RWPE1 (cell line): ENCODE measurements at regions of chr12 and their contacts with region 1.

Region 1: DNA sequence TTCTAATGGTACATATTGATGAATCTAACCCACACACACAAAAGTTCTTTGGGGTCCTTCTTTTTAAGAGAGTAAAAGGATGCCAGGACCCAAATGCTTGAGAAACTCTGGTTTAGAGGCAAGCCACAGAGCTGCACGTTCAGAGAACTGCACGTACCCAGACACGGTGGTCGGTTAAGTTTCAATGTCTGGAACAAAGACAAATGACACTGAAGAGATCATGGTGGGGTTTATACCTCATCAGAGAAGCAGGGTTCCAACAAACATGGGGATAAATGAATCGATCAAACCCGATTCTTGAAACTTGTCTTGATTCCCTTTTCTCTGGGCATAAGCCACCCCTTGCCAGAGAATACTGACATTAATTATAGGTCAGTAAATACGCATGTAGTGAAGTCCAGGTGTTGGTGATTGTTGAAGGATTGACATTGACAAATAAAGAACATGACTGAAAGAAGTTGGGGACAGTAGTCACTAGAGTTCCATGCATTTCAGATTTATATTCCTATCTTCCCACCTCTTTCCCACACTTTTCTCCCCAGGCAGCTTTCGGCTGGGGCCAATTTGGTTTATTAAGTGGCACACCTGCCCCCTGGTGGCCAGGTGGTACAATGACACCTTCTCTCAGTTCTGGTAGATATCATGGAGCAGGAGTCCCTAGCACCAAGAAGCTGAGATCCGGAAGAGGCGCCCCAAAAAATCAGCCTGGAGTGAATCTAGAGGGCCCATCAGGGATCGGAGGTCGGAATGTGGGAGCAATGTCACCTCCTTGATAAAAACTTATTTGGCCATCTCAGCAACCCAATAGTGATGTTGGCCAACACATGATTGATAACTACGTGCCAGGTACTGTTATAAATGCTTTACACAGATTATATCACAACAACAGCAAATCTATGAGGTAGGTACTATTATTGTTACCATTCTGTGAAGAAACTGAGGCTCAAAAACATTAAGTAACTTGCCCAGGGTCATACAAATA is 17.8 kb upstream of the HDAC7 start:
- DNase-seq: peak; percentile 84
- H3K27ac ChIP-seq: no peak overlapping the region
- CTCF ChIP-seq: peak; percentile 84

Region 2: DNA sequence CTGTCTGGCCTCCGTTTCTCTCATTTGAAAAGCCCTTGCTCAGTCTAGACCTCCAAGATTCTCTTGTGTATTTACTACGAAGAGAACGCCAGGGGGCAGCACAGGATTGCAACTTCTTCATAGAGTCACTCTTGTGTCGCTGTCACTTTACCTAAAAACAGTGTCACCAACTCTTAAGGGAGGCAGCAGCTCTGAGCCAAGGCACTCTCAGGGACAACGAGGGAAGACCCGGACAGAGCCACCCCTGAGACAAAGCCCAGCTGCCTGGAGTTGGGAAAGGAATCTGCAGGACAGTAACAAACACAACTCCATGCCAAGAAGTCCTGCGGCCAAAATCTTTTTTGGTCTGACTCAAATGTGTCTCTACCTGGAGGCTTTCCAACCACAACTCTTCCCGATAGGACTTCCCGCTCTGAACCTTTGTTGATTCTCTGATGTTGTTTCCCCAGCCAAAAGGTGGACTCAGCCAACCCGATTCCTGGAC is 122.0 kb before region 1 on chr12:
- CTCF ChIA-PET with region 1: interaction called, 19 read pairs
- POLR2A ChIA-PET with region 1: no interaction called
- DNase-seq: peak; percentile 55
- H3K27ac ChIP-seq: peak overlapping the region; percentile 8; the same call in 1 of the 2 replicates
- CTCF ChIP-seq: peak; percentile 80

Region 3: GRCh38 chr12:47742253-47742825 is 95.1 kb before region 1 on chr12:
- CTCF ChIA-PET with region 1: interaction called, 35 read pairs
- POLR2A ChIA-PET with region 1: no interaction called
- DNase-seq: peak; percentile 46
- H3K27ac ChIP-seq: no peak overlapping the region
- CTCF ChIP-seq: peak; percentile 96

Region 4: GRCh38 chr12:47779301-47779942 is 58.1 kb before region 1 on chr12:
- CTCF ChIA-PET with region 1: interaction called, 21 read pairs
- POLR2A ChIA-PET with region 1: interaction called, 5 read pairs
- DNase-seq: peak; percentile 77
- H3K27ac ChIP-seq: peak overlapping the region; percentile 90
- CTCF ChIP-seq: peak; percentile 93

Region 5: DNA sequence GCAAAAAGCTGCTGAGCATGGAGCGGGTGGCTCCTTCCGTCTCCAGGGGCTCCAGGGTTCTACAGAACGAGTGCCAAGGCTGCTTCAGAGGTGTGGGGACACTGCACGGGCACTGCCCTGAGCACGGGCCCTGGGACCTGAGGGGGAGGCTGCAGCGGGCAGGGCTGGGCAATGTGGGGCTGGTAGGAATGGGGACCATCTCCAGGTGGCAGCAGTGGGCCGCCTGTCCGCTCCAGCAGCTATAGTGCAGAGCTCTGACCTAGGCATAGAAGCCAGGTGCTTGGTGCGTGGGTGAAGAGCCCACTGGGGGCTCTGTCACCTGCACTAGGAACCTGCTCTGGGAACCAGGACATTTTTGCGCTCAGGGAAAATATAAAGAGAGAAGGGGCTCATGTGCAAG is 40.0 kb before region 1 on chr12:
- CTCF ChIA-PET with region 1: interaction called, 11 read pairs
- POLR2A ChIA-PET with region 1: no interaction called
- DNase-seq: no peak
- H3K27ac ChIP-seq: peak overlapping the region; percentile 42; the same call in 1 of the 2 replicates
- CTCF ChIP-seq: no peak

Region 6: DNA sequence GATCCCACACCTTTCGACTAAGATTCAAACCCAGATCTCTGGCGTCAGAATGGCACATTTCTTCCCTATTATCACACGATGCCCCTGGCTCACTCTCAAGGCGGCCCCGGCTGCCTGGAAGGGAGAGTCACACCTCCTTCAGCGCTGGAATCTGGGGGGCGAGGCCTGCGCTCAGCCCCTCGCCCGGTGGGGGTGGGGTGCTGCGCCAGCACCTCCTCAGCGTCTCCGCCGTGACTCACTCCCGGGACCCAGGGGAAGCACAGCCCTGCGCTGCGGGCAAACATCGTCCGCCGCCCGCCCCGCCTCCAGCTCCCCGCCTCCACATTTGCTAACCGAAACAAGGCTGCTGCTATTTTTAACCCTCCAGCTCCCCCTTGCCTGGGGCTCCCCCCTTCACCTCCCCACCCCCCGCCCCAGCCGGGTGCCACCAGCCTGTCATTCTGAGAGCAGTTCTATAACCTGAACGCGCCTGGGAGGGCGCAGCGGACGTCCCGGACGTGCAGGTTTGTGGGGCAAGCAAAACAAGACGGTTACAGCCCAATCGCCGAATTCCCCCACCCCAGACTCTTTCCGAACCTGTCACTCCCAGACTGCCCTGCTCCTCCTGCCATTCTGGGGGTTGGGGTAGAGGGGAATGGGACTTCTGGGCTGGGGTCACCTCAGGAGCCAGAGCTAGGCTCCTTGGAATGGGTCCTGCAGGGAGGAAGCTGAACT is 24.5 kb before region 1 on chr12:
- CTCF ChIA-PET with region 1: interaction called, 13 read pairs
- POLR2A ChIA-PET with region 1: interaction called, 4 read pairs
- DNase-seq: peak; percentile 92
- H3K27ac ChIP-seq: peak overlapping the region; percentile 99
- CTCF ChIP-seq: no peak

Region 7: GRCh38 chr12:47819896-47820630 is 17.4 kb before region 1 on chr12 and contains the start of gene HDAC7:
- CTCF ChIA-PET with region 1: interaction called, 10 read pairs
- POLR2A ChIA-PET with region 1: interaction called, 4 read pairs
- DNase-seq: peak; percentile 88
- H3K27ac ChIP-seq: peak within 1 kb of the TSS; percentile 99
- CTCF ChIP-seq: no peak